ENCODE measurements at regions of chr3 and their contacts with region 1.

Region 1: GRCh38 chr3:189961525-189962161 is 159.1 kb downstream of the P3H2 start:
- DNase-seq: no peak
- ATAC-seq: peak; percentile 80
- H3K4me3 ChIP-seq: no peak overlapping the region
- H3K27ac ChIP-seq: peak overlapping the region; percentile 57; the same call in 1 of the 2 replicates
- H3K4me1 ChIP-seq: peaks cover 8% of the 10 kb centered on the region
- H3K27me3 ChIP-seq: no peaks in the 10 kb centered on the region
- CTCF ChIP-seq: peak; percentile 95

Region 2: DNA sequence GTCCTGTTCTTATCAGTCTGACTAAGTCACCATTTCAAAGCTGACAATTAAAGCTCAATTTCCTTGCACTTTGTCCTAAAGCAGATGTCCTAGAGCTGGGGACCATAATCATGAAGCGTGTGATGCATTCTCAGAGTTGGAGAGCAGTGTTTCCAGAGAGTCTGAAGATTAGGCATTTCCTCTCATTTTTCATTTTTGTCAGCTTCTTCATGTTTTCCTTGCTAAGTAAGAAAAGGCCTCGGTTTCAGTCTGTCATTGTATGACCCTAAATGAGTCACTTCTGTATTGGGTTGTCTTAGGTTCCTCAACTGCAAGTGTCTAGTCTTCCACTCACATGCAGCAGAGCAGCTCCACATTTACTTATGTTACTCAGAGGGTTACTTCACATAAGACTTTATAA is 1047.1 kb before region 1 on chr3:
- CTCF ChIA-PET with region 1: no interaction called
- POLR2A ChIA-PET with region 1: no interaction called
- in situ Hi-C with region 1: no loop called
- intact Hi-C with region 1: no loop called
- DNase-seq: no peak
- ATAC-seq: no peak
- H3K4me3 ChIP-seq: no peak overlapping the region
- H3K27ac ChIP-seq: no peak overlapping the region
- H3K4me1 ChIP-seq: no peaks in the 10 kb centered on the region
- H3K27me3 ChIP-seq: no peaks in the 10 kb centered on the region
- CTCF ChIP-seq: no peak

Region 3: DNA sequence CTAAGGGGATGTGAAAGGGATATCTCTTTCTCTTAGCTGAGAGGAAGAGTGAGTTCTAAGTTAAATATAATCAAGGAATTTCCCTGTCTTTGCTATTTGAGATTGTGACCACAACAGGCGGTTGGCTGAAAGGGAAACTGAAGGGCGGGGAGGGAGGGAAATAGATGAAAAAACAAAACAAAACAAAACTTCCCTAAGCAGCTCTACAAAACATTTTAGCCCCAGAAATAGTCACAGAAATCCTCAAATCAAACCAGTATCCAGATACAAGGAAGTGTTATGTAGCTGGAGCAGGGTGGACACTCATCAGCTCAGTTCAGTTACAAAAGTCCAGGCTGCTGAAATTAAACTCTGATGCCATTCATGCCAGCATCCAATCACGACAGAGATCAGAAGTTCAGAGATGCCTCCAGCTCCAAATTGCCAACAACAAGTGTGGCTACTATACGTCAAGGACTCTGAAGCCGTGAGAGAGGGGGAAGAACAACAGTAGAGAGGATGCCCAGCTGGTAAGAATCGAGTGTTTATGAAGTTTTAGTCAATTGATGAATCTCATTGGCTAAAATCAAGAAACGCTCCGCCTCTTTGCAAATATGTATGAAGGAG is 330.8 kb before region 1 on chr3:
- CTCF ChIA-PET with region 1: no interaction called
- POLR2A ChIA-PET with region 1: no interaction called
- in situ Hi-C with region 1: no loop called
- intact Hi-C with region 1: no loop called
- DNase-seq: peak; percentile 25
- ATAC-seq: peak; percentile 79
- H3K4me3 ChIP-seq: peak overlapping the region; percentile 16 to 61
- H3K27ac ChIP-seq: no peak overlapping the region
- H3K4me1 ChIP-seq: no peaks in the 10 kb centered on the region
- H3K27me3 ChIP-seq: no peaks in the 10 kb centered on the region
- CTCF ChIP-seq: no peak

Region 4: DNA sequence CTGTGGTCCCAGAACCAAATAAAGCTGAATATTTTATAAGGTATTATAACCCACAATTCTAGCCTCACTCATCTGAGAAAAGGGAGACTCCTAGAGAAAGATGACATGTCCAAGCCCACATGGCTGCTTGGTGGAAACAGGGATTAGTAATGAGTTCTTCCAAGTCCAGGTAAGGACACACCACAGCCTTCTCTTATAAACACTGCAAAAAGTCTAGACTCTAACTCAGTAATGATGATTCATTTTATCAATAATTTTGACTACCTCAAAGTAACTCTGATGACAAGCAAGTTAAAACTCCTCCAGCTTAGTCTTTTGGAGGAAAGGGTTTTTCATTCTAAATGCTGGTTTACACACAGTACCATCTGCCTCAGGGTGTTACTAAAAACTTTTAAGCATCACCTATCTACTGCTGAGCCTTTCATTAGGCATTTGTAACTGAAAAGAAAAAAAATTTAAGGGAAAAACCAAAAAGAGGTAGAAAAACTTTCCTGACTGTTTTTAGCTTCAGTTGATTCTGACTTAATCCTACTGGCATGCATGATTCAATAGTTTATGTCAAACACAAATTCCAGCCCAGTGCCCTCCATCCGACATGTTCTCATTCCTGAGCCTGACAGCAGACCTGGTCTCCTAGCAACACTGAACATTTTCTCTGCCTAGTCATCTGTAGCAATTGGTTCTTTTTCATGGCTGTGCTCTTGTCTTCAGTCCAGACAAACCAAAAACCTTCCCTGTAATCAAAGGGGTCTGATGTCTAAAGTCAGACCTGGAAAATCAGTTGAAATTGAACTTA is 115.2 kb after region 1 on chr3:
- CTCF ChIA-PET with region 1: no interaction called
- POLR2A ChIA-PET with region 1: no interaction called
- in situ Hi-C with region 1: loop called (anchors 25 kb)
- intact Hi-C with region 1: no loop called
- DNase-seq: peak; percentile 77
- ATAC-seq: peak; percentile 91
- H3K4me3 ChIP-seq: no peak overlapping the region
- H3K27ac ChIP-seq: peak overlapping the region; percentile 69
- H3K4me1 ChIP-seq: peaks cover 32% of the 10 kb centered on the region
- H3K27me3 ChIP-seq: no peaks in the 10 kb centered on the region
- CTCF ChIP-seq: no peak

Region 5: DNA sequence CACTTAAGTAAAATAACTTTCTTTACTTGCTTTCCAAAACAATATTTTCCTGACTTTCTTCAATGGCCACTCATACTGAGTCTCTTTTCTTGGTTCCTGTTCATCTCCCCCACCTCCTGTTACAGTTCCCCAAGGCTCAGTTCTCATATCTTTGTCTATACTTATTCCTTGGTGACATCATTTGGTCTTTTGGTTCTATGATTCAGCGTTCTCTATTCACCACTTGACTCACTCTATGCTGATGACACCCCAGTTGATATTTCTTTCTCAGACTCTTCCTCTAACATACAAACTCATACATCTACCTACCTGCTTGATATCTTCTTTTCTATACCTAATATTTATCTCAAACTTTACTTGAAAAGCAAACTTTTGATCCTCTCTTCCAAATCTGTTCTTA is 244.1 kb after region 1 on chr3:
- CTCF ChIA-PET with region 1: interaction called, 5 read pairs
- POLR2A ChIA-PET with region 1: interaction called, 5 read pairs
- in situ Hi-C with region 1: no loop called
- intact Hi-C with region 1: loop called (anchors 1 kb)
- DNase-seq: no peak
- ATAC-seq: no peak
- H3K4me3 ChIP-seq: no peak overlapping the region
- H3K27ac ChIP-seq: no peak overlapping the region
- H3K4me1 ChIP-seq: peaks cover 3% of the 10 kb centered on the region; the same call in 1 of the 2 replicates
- H3K27me3 ChIP-seq: no peaks in the 10 kb centered on the region
- CTCF ChIP-seq: no peak

Region 6: DNA sequence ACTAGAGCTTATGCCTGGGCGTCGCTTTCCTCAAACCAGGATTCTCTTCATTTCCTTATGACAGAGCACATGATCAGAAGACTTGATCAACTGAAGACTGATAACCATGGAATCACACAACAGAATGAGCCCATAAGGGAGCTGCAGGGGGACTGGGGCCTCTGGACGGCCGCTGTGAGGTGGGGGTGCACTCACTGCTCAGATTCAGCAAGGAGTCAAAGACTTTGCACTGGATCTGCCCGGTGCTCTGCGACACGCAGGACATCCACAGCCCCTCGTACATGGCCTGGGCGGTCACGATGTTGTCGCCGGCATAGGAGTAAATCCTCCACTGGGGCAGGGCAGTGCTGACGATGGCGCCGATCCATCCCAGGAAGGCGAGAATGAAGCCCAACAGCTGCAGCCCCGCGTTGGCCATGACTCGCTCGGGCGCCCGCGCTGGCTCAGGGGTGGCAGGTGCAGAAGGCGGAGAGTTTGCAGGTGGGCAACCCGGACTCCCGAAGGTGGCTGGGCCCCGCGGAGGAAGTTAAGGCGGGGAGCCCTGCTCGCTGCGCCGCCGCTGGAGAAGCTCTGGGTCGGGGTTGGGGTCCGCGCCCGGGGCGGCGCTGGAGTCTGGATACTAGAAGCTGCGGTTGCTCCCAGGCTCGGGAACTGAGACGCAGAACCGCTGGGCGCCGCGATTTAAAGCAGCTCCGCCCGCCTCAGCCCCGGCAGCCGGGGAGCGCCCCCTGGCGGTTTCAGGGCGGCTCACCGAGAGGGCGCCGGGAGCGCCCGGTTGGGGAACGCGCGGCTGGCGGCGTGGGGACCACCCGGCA is 360.4 kb after region 1 on chr3 and contains the start of gene CLDN1:
- CTCF ChIA-PET with region 1: interaction called, 9 read pairs
- POLR2A ChIA-PET with region 1: no interaction called
- in situ Hi-C with region 1: no loop called
- intact Hi-C with region 1: loop called (anchors 5 kb)
- DNase-seq: no peak
- ATAC-seq: peak; percentile 96
- H3K4me3 ChIP-seq: peak within 1 kb of the TSS; percentile 66 to 67
- H3K27ac ChIP-seq: peak within 1 kb of the TSS; percentile 79
- H3K4me1 ChIP-seq: peaks cover 17% of the 10 kb centered on the region; the same call in 1 of the 2 replicates
- H3K27me3 ChIP-seq: 0 out of 2 replicates have a peak, but pooled peaks cover 2% of the 10 kb centered on the region
- CTCF ChIP-seq: peak; percentile 100
- total RNA-seq, gene CLDN1: 30.9 TPM

Region 7: GRCh38 chr3:190414297-190414696 is 452.7 kb after region 1 on chr3:
- CTCF ChIA-PET with region 1: interaction called, 10 read pairs
- POLR2A ChIA-PET with region 1: no interaction called
- in situ Hi-C with region 1: no loop called
- intact Hi-C with region 1: no loop called
- DNase-seq: no peak
- ATAC-seq: no peak
- H3K4me3 ChIP-seq: no peak overlapping the region
- H3K27ac ChIP-seq: no peak overlapping the region
- H3K4me1 ChIP-seq: no peaks in the 10 kb centered on the region
- H3K27me3 ChIP-seq: no peaks in the 10 kb centered on the region
- CTCF ChIP-seq: no peak

Region 8: GRCh38 chr3:190424478-190425439 is 463.1 kb after region 1 on chr3:
- CTCF ChIA-PET with region 1: no interaction called
- POLR2A ChIA-PET with region 1: no interaction called
- in situ Hi-C with region 1: no loop called
- intact Hi-C with region 1: loop called (anchors 5 kb)
- DNase-seq: peak; percentile 93
- ATAC-seq: peak; percentile 96
- H3K4me3 ChIP-seq: peak overlapping the region; percentile 21 to 22
- H3K27ac ChIP-seq: no peak overlapping the region
- H3K4me1 ChIP-seq: peaks cover 4% of the 10 kb centered on the region; the same call in 1 of the 2 replicates
- H3K27me3 ChIP-seq: no peaks in the 10 kb centered on the region
- CTCF ChIP-seq: peak; percentile 82

Measured in Panc1 (cell line).